ENCODE measurements at regions of chr14 and their contacts with region 1.

Region 1: GRCh38 chr14:22386924-22387775 is 201.9 kb downstream of the DAD1 start:
- DNase-seq: no peak
- H3K4me3 ChIP-seq: no peak overlapping the region
- H3K27me3 ChIP-seq: peaks cover 9% of the 10 kb centered on the region
- CTCF ChIP-seq: peak; percentile 74

Region 2: GRCh38 chr14:22252686-22253085 is 134.5 kb before region 1 on chr14:
- CTCF ChIA-PET with region 1: no interaction called
- POLR2A ChIA-PET with region 1: no interaction called
- DNase-seq: no peak
- H3K4me3 ChIP-seq: no peak overlapping the region
- H3K27me3 ChIP-seq: no peaks in the 10 kb centered on the region
- CTCF ChIP-seq: no peak

Region 3: GRCh38 chr14:22375321-22375930 is 11.7 kb before region 1 on chr14:
- CTCF ChIA-PET with region 1: interaction called, 16 read pairs
- POLR2A ChIA-PET with region 1: no interaction called
- DNase-seq: no peak
- H3K4me3 ChIP-seq: no peak overlapping the region
- H3K27me3 ChIP-seq: peaks cover 3% of the 10 kb centered on the region
- CTCF ChIP-seq: peak; percentile 59

Region 4: DNA sequence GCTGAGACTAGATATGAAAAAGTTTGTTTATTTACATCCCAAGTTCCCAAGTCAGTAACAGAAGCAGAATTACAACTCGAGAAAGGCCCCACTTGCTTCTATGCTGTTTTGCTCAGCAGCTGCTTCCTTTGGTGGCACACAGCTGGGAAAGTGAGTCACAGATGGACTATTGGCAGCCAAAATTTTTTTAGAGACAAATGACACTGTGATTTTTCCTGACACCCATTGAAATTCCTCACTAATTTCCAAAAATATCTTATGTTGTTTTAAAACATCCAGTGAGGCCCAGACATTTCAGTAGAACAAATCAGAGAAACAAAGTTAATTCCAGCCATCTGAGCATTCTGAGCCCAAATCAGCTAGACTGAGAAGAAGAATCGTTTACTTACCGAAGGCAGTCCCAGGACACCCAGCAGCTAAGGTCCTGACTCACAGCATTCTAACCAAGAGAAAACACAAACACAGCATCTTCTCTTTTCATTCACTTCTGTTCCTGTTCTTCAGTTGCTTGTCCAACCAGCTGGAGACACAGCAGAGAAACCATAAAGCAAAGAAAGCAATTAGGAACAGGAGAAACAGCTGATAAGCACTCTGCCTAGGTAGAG is 13.6 kb after region 1 on chr14:
- CTCF ChIA-PET with region 1: interaction called, 13 read pairs
- POLR2A ChIA-PET with region 1: no interaction called
- DNase-seq: no peak
- H3K4me3 ChIP-seq: no peak overlapping the region
- H3K27me3 ChIP-seq: peaks cover 12% of the 10 kb centered on the region
- CTCF ChIP-seq: no peak

Region 5: DNA sequence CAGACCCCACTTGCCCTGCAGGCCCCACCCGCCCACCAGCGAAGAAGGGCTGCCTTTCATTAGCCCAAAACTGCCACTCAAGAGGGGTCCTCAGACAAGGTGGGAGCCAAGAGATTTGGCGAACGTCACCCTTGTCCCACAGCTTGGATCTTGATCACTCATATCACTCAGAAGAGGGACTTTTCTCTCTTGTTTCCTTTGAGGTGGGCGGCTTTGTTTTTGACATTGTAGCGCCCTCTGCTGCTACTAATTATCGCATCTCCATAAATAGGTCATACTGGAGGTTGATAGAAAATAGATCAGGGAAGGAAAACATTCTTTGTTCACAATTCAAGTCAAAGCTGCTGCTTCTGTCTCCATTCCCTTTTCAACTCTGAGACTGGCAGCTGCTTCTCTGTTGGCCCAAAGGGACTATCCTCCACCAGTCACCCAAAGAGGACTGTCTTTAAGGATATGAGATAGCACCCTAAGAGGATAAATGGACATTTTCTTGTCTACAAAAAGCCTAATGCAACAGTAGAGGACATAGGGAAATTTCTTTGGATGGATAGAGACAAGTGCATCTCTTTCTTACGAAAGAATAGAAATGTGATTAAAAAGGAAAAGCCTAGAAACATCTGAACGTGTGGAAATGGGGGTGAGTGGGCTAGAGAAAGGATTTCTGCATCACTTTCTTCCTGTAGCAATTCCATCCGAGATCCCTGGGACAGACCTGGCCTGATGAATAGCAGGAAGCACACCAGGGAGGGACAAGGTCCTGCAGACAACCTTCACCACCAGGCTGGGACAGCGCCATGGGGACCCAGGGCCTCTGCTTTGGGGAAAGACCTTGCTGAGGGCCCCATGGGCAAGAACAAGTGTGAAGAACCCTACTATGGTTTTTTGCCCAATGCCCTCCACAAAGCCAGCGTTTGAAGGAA is 86.0 kb after region 1 on chr14:
- CTCF ChIA-PET with region 1: interaction called, 43 read pairs
- POLR2A ChIA-PET with region 1: no interaction called
- DNase-seq: no peak
- H3K4me3 ChIP-seq: no peak overlapping the region
- H3K27me3 ChIP-seq: peaks cover 1% of the 10 kb centered on the region
- CTCF ChIP-seq: peak; percentile 31

Region 6: GRCh38 chr14:23320774-23321571 is 933.8 kb after region 1 on chr14 and contains the start of gene PABPN1:
- CTCF ChIA-PET with region 1: no interaction called
- POLR2A ChIA-PET with region 1: no interaction called
- DNase-seq: peak; percentile 98
- H3K4me3 ChIP-seq: peak within 1 kb of the TSS; percentile 60
- H3K27me3 ChIP-seq: no peaks in the 10 kb centered on the region
- CTCF ChIP-seq: no peak
- polyA plus RNA-seq, gene PABPN1: 119 and 143 TPM in 2 replicates